A673 (cell line): ENCODE measurements at regions of chr17 and their contacts with region 1.

Region 1: GRCh38 chr17:20226814-20227482 is 217.8 kb downstream of the SPECC1 start:
- DNase-seq: peak; percentile 84
- H3K4me3 ChIP-seq: no peak overlapping the region
- H3K27ac ChIP-seq: no peak overlapping the region
- H3K4me1 ChIP-seq: no peaks in the 10 kb centered on the region
- H3K27me3 ChIP-seq: no peaks in the 10 kb centered on the region
- CTCF ChIP-seq: peak; percentile 96

Region 2: DNA sequence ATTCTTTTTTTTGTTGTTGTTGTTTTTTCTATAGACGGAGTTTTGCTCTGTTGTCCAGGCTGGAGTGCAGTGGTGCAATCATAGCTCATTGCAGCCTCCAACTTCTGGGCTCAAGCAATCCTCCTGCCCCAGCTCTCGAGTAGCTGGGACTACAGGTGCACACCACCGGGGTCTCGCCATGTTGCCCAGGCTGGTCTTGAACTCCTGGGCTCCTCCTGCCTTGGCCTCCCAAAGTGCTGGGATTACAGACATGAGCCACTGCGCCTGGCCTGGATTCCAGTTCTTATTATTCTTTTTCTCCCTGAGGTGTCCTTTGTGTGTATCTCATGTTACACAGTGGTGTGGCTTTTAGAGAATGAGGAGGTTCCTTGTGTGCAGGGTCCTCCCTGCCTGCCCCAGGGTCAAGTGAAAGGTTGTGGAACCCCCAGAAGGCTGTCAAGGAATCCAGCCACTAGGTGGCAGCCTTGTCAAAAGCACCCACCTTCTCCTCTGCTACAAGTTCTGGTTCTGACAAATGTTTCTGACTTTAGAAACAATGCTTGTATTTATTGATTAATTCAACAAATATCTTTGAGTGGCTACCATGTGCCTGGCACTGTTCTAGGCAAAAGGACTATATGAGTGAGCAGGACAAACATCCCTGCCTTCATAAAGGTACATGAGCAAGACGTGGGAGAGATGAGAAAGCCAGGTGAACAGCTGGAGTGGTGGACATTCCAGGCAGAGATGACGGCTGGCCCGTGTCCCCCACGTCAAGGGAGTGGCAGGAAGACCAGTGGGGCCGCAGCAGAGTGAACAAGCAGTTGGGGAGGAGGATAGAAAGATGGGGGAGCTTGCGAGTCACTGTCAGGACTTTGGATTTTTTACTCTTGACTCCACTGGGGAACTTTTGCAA is 105.3 kb before region 1 on chr17:
- CTCF ChIA-PET with region 1: interaction called, 3 read pairs
- POLR2A ChIA-PET with region 1: no interaction called
- intact Hi-C with region 1: loop called (anchors 2 kb)
- DNase-seq: peak; percentile 53
- H3K4me3 ChIP-seq: no peak overlapping the region
- H3K27ac ChIP-seq: no peak overlapping the region
- H3K4me1 ChIP-seq: no peaks in the 10 kb centered on the region
- H3K27me3 ChIP-seq: no peaks in the 10 kb centered on the region
- CTCF ChIP-seq: peak; percentile 96

Region 3: DNA sequence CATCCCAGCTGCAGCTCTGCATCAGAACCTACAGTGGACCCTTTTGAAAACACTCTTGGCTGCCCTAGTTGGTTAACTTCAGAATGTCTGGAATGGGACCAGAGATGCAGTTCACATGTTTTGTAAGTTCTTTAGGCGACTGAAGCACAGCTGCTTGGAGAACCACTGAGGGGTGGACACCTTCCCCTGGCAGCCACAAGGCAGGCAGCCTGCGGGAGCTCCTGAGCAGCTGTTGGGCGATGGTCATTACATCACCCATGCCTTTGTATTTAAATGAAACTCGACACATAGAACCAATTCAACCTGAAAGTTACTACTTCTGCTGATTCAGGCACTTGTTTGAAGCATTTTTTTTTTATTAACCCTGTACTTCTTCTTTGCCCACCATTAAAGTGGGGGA is 88.9 kb after region 1 on chr17:
- CTCF ChIA-PET with region 1: interaction called, 9 read pairs
- POLR2A ChIA-PET with region 1: no interaction called
- intact Hi-C with region 1: loop called (anchors 1 kb)
- DNase-seq: no peak
- H3K4me3 ChIP-seq: no peak overlapping the region
- H3K27ac ChIP-seq: no peak overlapping the region
- H3K4me1 ChIP-seq: no peaks in the 10 kb centered on the region
- H3K27me3 ChIP-seq: no peaks in the 10 kb centered on the region
- CTCF ChIP-seq: no peak

Region 4: DNA sequence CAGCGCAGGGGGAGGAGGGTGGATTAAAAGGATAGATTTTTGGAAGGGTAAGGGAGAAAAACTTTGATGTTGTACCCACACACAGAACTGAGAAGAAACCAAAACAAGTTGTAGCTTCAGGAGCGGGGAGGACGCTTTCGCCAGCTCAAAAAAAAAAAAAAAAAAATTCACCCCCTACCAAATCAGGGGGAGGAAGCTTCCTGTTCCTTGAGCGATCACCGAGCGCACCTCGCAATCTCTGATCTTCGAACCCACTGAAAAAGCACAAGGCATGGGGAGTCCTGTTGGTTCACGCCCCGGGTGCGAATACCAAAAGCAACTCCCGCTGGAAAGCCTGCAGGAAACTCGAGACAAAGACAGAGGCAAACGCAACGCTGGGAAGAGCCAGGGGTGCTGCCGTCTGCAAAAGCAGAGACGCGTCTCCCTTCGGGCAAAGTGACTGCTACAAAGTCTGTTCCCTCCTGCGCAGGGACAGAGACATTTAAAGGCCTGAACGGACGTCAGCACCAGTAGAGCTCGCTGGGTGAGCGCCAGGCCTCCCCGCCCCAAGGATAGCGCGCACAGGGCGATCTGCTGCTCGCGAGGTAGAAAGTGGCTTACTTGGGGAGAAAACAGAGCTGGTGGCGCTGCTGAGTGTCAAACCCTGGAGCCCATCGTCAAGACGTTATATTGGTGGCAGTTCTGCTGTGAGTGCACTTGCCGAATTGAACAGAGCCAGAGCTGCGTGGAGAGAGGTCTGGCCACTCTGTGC is 625.5 kb after region 1 on chr17:
- CTCF ChIA-PET with region 1: no interaction called
- POLR2A ChIA-PET with region 1: no interaction called
- intact Hi-C with region 1: loop called (anchors 10 kb)
- DNase-seq: peak; percentile 80
- H3K4me3 ChIP-seq: peak overlapping the region; percentile 46
- H3K27ac ChIP-seq: no peak overlapping the region
- H3K4me1 ChIP-seq: peaks cover 9% of the 10 kb centered on the region
- H3K27me3 ChIP-seq: peaks cover 14% of the 10 kb centered on the region
- CTCF ChIP-seq: 0 out of 2 replicates have a peak, but pooled peaks have one; percentile 40